ENCODE measurements at regions of chr17 and their contacts with region 1.

Region 1: DNA sequence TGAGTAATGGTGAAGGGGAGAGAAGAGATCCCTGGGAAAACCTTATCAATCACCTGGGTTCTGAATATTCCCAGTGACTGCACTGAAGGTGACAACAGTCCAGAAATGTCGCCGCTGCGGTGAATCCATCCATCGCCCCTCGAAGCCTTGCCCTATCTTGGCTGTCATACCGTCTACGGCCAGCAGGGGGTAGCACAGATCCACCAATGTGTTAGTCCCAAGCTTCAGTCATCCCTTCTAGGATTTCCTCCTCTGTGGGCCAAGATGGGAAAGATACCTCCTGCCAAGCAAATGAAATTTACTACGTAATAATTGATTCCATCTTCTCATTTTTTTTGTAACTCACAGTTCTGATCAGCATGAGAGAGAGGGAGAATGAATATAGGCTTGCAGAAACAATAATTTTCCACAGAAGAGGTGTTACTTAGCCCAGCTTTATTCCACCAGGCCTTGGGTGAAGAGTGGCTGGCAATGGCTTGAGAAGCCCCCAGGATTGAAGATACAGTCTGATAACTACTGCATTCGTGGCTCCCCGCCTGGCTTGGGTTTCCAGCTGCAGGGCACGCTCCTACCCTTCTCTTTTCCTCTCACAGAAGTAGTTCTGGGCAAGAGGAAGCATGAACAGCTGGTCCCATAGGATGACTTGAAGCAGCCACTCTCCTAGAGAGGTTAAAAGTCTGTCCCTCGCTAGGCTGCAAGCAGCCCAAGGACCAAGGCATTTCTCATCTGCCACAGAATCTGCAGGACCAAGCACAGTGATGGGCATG is 2.6 kb upstream of the FMNL1 start:
- H3K4me3 Mint-ChIP-seq: peak overlapping the region; percentile 77
- H3K27ac Mint-ChIP-seq: no peak overlapping the region
- H3K4me1 Mint-ChIP-seq: peaks cover 46% of the 10 kb centered on the region
- H3K27me3 Mint-ChIP-seq: no peaks in the 10 kb centered on the region

Region 2: DNA sequence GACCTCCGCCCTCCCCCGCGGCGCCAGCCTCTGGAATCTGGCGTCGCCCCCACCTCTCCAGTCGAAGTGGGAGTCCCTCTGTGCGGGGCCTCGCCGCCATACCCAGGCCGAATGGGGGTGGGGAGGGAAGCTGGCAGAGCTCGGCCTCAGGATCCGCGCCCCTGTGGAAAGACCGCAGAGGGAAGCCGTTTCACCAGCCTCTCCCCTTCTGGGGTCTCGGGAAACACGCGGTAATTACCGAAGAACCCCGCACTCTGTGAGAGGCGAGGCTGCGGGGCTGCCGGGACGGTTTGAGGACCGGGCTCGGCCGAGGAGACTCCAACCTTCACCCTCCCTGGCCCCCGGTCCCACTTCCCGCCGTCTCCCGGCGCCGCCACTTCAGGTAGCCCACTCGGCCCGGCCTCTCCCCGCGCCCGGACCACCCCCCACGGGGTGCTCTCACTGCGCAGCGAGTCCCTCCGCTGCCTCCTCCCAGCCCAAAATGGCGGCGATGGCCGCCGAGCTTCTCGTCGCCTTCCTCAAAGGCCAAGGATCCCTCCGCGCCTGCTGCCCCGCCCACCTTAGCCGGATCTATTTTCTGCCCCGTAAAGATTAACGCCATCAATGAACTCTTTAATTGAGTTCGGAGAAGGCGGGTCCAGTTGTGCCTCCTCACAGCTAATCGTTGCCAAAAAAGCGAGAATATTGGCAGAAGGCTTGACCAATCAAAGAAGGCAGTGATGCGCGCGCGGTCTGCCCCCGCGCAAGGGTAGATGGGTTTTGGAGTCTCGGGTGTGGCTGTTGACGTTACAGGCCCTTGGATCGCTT is 57.9 kb before region 1 on chr17:
- intact Hi-C with region 1: no loop called
- H3K4me3 Mint-ChIP-seq: peak overlapping the region; percentile 99
- H3K27ac Mint-ChIP-seq: peak overlapping the region; percentile 97
- H3K4me1 Mint-ChIP-seq: peaks cover 55% of the 10 kb centered on the region
- H3K27me3 Mint-ChIP-seq: no peaks in the 10 kb centered on the region

Region 3: GRCh38 chr17:45235416-45236281 is 16.6 kb after region 1 on chr17:
- intact Hi-C with region 1: loop called (anchors 1 kb)
- H3K4me3 Mint-ChIP-seq: no peak overlapping the region
- H3K27ac Mint-ChIP-seq: peak overlapping the region; percentile 48
- H3K4me1 Mint-ChIP-seq: peaks cover 76% of the 10 kb centered on the region
- H3K27me3 Mint-ChIP-seq: no peaks in the 10 kb centered on the region